ENCODE measurements at regions of chr2 and their contacts with region 1.

Region 1: GRCh38 chr2:224357098-224357901 is 44.6 kb downstream of the FAM124B start:
- DNase-seq: peak; percentile 59 to 79
- H3K4me3 ChIP-seq: no peak overlapping the region
- H3K4me3 Mint-ChIP-seq: no peak overlapping the region
- H3K27ac Mint-ChIP-seq: no peak overlapping the region
- H3K4me1 ChIP-seq: no peaks in the 10 kb centered on the region
- H3K4me1 Mint-ChIP-seq: no peaks in the 10 kb centered on the region
- H3K27me3 ChIP-seq: no peaks in the 10 kb centered on the region
- H3K27me3 Mint-ChIP-seq: peaks cover 19% of the 10 kb centered on the region
- CTCF ChIP-seq: peak; percentile 80 to 95

Region 2: DNA sequence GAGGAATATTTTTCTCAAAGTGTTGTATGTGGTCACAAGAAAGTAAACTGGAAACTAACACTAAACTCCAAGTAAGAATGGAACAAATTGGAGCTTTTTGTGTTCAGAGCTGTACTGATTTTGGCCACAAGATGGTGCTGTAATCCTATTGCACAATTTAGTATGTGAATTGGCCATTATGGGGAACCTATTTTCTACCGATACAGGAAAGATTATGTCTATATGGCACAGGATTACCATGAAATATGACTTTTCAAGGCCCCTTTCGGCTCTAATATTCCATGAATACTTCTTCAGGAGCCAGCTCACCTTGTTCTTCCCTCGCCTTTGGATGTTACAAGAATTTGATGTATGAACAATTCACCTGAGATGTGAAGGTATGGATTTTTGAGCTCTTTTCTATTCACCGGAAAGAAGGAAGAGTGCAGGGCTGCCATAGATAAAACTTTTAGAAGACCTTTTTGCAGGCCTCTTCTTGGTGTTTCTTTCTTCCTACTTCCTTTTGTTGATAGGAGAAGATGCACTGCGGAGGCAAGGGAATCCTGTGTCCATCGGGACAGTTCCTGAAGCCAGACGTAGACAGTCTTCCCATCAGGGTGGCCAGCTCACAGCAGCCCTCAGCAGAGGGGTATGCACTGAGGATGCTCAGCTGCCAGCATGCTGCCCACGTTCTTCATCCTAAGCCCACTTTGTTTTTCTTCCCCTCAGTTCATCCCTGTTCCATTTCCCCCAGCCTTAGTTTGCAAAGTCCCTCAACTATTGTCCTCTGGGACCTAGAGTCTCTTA is 386.8 kb before region 1 on chr2:
- CTCF ChIA-PET with region 1: interaction called, 13 read pairs
- POLR2A ChIA-PET with region 1: no interaction called
- intact Hi-C with region 1: loop called (anchors 1 kb)
- DNase-seq: peak in 1 of 2 experiments; percentile 76
- H3K4me3 ChIP-seq: no peak overlapping the region
- H3K4me3 Mint-ChIP-seq: no peak overlapping the region
- H3K27ac Mint-ChIP-seq: no peak overlapping the region
- H3K4me1 ChIP-seq: no peaks in the 10 kb centered on the region
- H3K4me1 Mint-ChIP-seq: no peaks in the 10 kb centered on the region
- H3K27me3 ChIP-seq: no peaks in the 10 kb centered on the region
- H3K27me3 Mint-ChIP-seq: no peaks in the 10 kb centered on the region
- CTCF ChIP-seq: peak; percentile 95 to 98

Region 3: GRCh38 chr2:224369028-224369632 is 11.8 kb after region 1 on chr2:
- CTCF ChIA-PET with region 1: interaction called, 5 read pairs
- POLR2A ChIA-PET with region 1: no interaction called
- intact Hi-C with region 1: loop called (anchors 1 kb)
- DNase-seq: peak in 1 of 2 experiments; percentile 58
- H3K4me3 ChIP-seq: no peak overlapping the region
- H3K4me3 Mint-ChIP-seq: no peak overlapping the region
- H3K27ac Mint-ChIP-seq: no peak overlapping the region
- H3K4me1 ChIP-seq: no peaks in the 10 kb centered on the region
- H3K4me1 Mint-ChIP-seq: no peaks in the 10 kb centered on the region
- H3K27me3 ChIP-seq: no peaks in the 10 kb centered on the region
- H3K27me3 Mint-ChIP-seq: peaks cover 8% of the 10 kb centered on the region
- CTCF ChIP-seq: peak; percentile 71 to 83

Region 4: DNA sequence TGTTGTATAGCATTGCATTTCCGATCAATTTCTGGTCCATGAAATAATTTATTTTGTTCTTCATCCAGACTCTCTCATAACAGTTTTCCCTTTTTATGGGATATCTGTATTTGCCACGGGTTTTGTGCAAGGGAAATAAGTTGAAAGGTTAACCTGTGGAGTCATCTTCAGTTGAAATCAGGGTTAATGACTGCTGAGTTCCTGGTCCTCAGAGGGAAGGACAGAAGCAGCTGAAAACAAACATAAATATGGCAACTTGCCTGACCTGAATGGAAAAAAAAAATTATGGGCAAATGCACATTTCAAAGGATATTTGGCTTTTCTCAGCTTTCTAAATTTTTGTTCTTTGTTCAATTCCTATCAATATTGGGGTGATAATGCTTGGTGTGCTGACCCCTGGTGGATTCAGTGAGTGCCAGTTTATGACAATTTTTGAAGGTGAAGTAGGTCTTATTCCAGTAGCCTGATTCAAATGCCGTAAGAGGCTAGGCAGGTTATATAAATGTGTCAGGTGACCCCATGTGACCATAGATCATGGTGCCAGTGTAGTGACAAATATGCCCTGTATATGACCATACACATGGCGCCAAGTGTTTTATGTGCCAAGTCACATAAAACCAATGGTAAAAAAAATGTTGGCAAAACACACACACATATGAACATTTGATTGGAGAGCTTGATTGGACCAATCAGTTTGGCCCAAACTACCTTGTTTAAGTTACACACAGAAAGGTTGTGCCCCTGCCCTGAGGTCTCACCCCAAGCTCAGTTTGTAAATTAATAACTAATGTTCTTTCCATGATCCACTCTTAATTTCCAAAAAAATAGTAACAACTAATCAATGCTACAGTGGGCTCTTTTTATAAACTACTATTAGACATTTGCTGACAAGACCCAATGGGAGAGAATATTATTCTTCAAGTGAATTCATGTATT is 92.2 kb after region 1 on chr2:
- CTCF ChIA-PET with region 1: no interaction called
- POLR2A ChIA-PET with region 1: no interaction called
- intact Hi-C with region 1: loop called (anchors 1 kb)
- DNase-seq: peak in 1 of 2 experiments; percentile 35
- H3K4me3 ChIP-seq: no peak overlapping the region
- H3K4me3 Mint-ChIP-seq: no peak overlapping the region
- H3K27ac Mint-ChIP-seq: no peak overlapping the region
- H3K4me1 ChIP-seq: no peaks in the 10 kb centered on the region
- H3K4me1 Mint-ChIP-seq: no peaks in the 10 kb centered on the region
- H3K27me3 ChIP-seq: no peaks in the 10 kb centered on the region
- H3K27me3 Mint-ChIP-seq: no peaks in the 10 kb centered on the region
- CTCF ChIP-seq: peak; percentile 82 to 85

Region 5: DNA sequence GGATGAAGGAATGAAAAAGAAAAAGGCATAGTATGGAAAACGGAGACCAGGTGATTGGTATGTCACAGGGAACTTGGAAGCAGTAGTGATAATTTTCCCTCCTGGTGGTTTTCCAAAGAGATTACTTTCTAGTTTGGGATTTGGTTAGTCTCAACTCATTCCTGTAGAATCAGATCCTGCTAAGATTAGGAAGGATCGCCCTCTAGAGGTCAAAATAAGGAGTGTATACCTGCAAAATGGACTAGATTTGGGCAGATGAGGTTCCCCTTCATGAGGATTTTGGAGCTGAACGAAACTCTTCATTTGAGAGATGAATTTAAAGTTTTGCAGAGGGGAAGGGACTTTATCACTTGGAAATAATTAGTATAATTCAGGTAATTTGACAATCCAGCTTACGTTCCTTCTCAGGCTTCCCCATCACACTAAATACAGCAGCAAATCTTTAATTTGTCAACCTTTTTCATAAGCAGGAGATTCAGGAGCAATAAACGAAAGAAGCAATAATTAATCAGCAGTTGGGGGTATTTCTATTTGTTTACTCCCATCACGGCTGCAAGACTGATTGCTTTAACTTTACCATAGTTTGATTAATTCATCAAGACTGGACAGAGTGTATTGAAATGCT is 293.6 kb after region 1 on chr2:
- CTCF ChIA-PET with region 1: interaction called, 3 read pairs
- POLR2A ChIA-PET with region 1: no interaction called
- intact Hi-C with region 1: loop called (anchors 1 kb)
- DNase-seq: peak in 1 of 2 experiments; percentile 40
- H3K4me3 ChIP-seq: no peak overlapping the region
- H3K4me3 Mint-ChIP-seq: no peak overlapping the region
- H3K27ac Mint-ChIP-seq: no peak overlapping the region
- H3K4me1 ChIP-seq: no peaks in the 10 kb centered on the region
- H3K4me1 Mint-ChIP-seq: no peaks in the 10 kb centered on the region
- H3K27me3 ChIP-seq: no peaks in the 10 kb centered on the region
- H3K27me3 Mint-ChIP-seq: no peaks in the 10 kb centered on the region
- CTCF ChIP-seq: peak; percentile 36 to 57

Region 6: DNA sequence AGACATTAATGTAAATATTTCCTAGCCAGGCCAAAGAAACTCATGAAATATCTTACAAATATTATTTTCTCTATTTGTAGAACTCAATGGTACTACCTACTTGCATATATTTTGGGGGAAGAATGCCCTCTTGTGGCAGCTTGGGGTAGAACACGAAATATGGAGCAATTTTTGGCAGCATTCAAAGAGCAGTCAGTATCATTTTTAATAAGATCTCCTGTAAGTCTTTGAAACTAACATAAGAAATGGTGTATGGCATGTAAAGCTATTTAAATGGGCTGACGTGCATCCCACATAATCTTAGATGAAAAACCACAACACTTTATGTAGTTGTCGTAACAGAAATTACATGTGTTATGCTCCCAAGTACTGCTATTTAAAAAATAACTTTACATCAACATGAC is 421.2 kb after region 1 on chr2:
- CTCF ChIA-PET with region 1: no interaction called
- POLR2A ChIA-PET with region 1: no interaction called
- intact Hi-C with region 1: loop called (anchors 1 kb)
- DNase-seq: peak; percentile 32 to 36
- H3K4me3 ChIP-seq: no peak overlapping the region
- H3K4me3 Mint-ChIP-seq: no peak overlapping the region
- H3K27ac Mint-ChIP-seq: no peak overlapping the region
- H3K4me1 ChIP-seq: no peaks in the 10 kb centered on the region
- H3K4me1 Mint-ChIP-seq: peaks cover 7% of the 10 kb centered on the region
- H3K27me3 ChIP-seq: no peaks in the 10 kb centered on the region
- H3K27me3 Mint-ChIP-seq: no peaks in the 10 kb centered on the region
- CTCF ChIP-seq: peak; percentile 53 to 74

Measured in Caco-2 (cell line).